ENCODE measurements at regions of chr21 and their contacts with region 1.

Region 1: GRCh38 chr21:14602382-14602958 is 56.4 kb upstream of the SAMSN1 start:
- DNase-seq: no peak
- H3K4me3 Mint-ChIP-seq: peak overlapping the region; percentile 63
- H3K27ac Mint-ChIP-seq: peak overlapping the region; percentile 10
- H3K4me1 Mint-ChIP-seq: peaks cover 38% of the 10 kb centered on the region
- H3K27me3 Mint-ChIP-seq: no peaks in the 10 kb centered on the region

Region 2: GRCh38 chr21:14825514-14825974 is 223.1 kb after region 1 on chr21:
- intact Hi-C with region 1: loop called (anchors 10 kb)
- DNase-seq: no peak
- H3K4me3 Mint-ChIP-seq: no peak overlapping the region
- H3K27ac Mint-ChIP-seq: no peak overlapping the region
- H3K4me1 Mint-ChIP-seq: peaks cover 12% of the 10 kb centered on the region
- H3K27me3 Mint-ChIP-seq: no peaks in the 10 kb centered on the region

Measured in activated T-helper 1 cell treated with anti-CD3 and anti-CD28 coated beads, Interleukin-12 subunit alpha, Interleukin-12 subunit beta, Interleukin-2, Interleukin-4 antibody, amounts not matched to agents 30 ng/mL and 10 ng/mL and 1 ng/mL, durations not matched to agents 14 hours and 24 hours and 36 hours (primary cell).